ENCODE measurements at regions of chr5 and their contacts with region 1.

Region 1: GRCh38 chr5:40688127-40688761 is 8.5 kb downstream of the PTGER4 start:
- DNase-seq: peak; percentile 81 to 88 (median 84)
- H3K4me3 ChIP-seq: peak overlapping the region in 1 of 2 donors; percentile 46
- H3K4me3 Mint-ChIP-seq: peak overlapping the region; percentile 92 to 100 (median 99)
- H3K27ac ChIP-seq: peak overlapping the region; percentile 59
- H3K27ac Mint-ChIP-seq: peak overlapping the region; percentile 91 to 98 (median 95)
- H3K4me1 ChIP-seq: peaks cover 81% of the 10 kb centered on the region
- H3K4me1 Mint-ChIP-seq: peaks cover 51 to 89% (median 73%) of the 10 kb centered on the region in 4 donors
- H3K27me3 ChIP-seq: no peaks in the 10 kb centered on the region
- H3K27me3 Mint-ChIP-seq: no peaks in the 10 kb centered on the region

Region 2: GRCh38 chr5:39948867-39949468 is 739.3 kb before region 1 on chr5:
- CTCF ChIA-PET with region 1: interaction called, 24 read pairs
- POLR2A ChIA-PET with region 1: interaction called, 4 read pairs
- intact Hi-C with region 1: loop called (anchors 1 kb)
- DNase-seq: peak; percentile 64 to 69 (median 66)
- H3K4me3 ChIP-seq: no peak overlapping the region
- H3K4me3 Mint-ChIP-seq: no peak overlapping the region
- H3K27ac ChIP-seq: no peak overlapping the region
- H3K27ac Mint-ChIP-seq: no peak overlapping the region
- H3K4me1 ChIP-seq: no peaks in the 10 kb centered on the region
- H3K4me1 Mint-ChIP-seq: peaks cover 0 to 5% (median 2%) of the 10 kb centered on the region in 4 donors
- H3K27me3 ChIP-seq: no peaks in the 10 kb centered on the region
- H3K27me3 Mint-ChIP-seq: no peaks in the 10 kb centered on the region

Region 3: GRCh38 chr5:40367255-40367654 is 321.0 kb before region 1 on chr5:
- CTCF ChIA-PET with region 1: interaction called, 7 read pairs
- POLR2A ChIA-PET with region 1: interaction called, 4 read pairs
- intact Hi-C with region 1: loop called (anchors 1 kb)
- DNase-seq: peak in 4 of 5 donors; percentile 34 to 39 (median 36)
- H3K4me3 ChIP-seq: no peak overlapping the region
- H3K4me3 Mint-ChIP-seq: no peak overlapping the region
- H3K27ac ChIP-seq: no peak overlapping the region
- H3K27ac Mint-ChIP-seq: peak overlapping the region in 4 of 7 donors; percentile 2 to 84 (median 70)
- H3K4me1 ChIP-seq: peaks cover 4% of the 10 kb centered on the region
- H3K4me1 Mint-ChIP-seq: peaks cover 3 to 14% (median 9%) of the 10 kb centered on the region in 4 donors
- H3K27me3 ChIP-seq: no peaks in the 10 kb centered on the region
- H3K27me3 Mint-ChIP-seq: no peaks in the 10 kb centered on the region

Region 4: DNA sequence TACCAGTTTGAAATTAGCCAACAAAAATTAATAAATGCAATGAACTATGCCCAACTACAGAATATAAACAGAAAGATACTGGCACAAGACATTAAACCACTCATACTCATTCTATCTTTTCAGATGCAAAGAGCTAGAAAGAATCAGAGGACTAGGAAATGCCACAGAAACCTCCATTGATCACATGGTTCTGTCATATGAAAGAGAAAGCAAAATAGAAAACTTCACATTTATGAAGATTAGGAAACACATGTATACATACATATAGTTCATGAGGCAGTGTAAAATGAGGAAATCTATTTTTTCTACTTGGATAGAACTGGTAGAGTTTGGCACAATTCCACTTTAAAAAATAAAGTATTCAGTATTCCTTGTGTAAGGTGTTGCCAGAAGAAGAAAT is 283.6 kb before region 1 on chr5:
- CTCF ChIA-PET with region 1: interaction called, 14 read pairs
- POLR2A ChIA-PET with region 1: interaction called, 194 read pairs
- intact Hi-C with region 1: no loop called
- DNase-seq: peak; percentile 50 to 68 (median 58)
- H3K4me3 ChIP-seq: no peak overlapping the region
- H3K4me3 Mint-ChIP-seq: peak overlapping the region; percentile 4 to 71 (median 37)
- H3K27ac ChIP-seq: peak overlapping the region; percentile 86
- H3K27ac Mint-ChIP-seq: peak overlapping the region; percentile 85 to 100 (median 99)
- H3K4me1 ChIP-seq: peaks cover 71% of the 10 kb centered on the region
- H3K4me1 Mint-ChIP-seq: peaks cover 49 to 90% (median 72%) of the 10 kb centered on the region in 4 donors
- H3K27me3 ChIP-seq: no peaks in the 10 kb centered on the region
- H3K27me3 Mint-ChIP-seq: no peaks in the 10 kb centered on the region

Region 5: GRCh38 chr5:40502736-40503135 is 185.5 kb before region 1 on chr5:
- CTCF ChIA-PET with region 1: interaction called, 3 read pairs
- POLR2A ChIA-PET with region 1: no interaction called
- intact Hi-C with region 1: loop called (anchors 1 kb)
- DNase-seq: no peak
- H3K4me3 ChIP-seq: no peak overlapping the region
- H3K4me3 Mint-ChIP-seq: no peak overlapping the region
- H3K27ac ChIP-seq: no peak overlapping the region
- H3K27ac Mint-ChIP-seq: no peak overlapping the region
- H3K4me1 ChIP-seq: peaks cover 6% of the 10 kb centered on the region
- H3K4me1 Mint-ChIP-seq: peaks cover 4 to 12% (median 6%) of the 10 kb centered on the region in 4 donors
- H3K27me3 ChIP-seq: no peaks in the 10 kb centered on the region
- H3K27me3 Mint-ChIP-seq: no peaks in the 10 kb centered on the region

Region 6: GRCh38 chr5:40755407-40756365 is 67.4 kb after region 1 on chr5 and contains the start of gene TTC33:
- CTCF ChIA-PET with region 1: no interaction called
- POLR2A ChIA-PET with region 1: no interaction called
- intact Hi-C with region 1: loop called (anchors 2 kb)
- DNase-seq: peak; percentile 90 to 97 (median 92)
- H3K4me3 ChIP-seq: peak within 1 kb of the TSS; percentile 93 to 95
- H3K4me3 Mint-ChIP-seq: no peak within 1 kb of the TSS
- H3K27ac ChIP-seq: peak within 1 kb of the TSS; percentile 90
- H3K27ac Mint-ChIP-seq: peak within 1 kb of the TSS in 1 of 7 donors; percentile 68
- H3K4me1 ChIP-seq: peaks cover 21% of the 10 kb centered on the region
- H3K4me1 Mint-ChIP-seq: peaks cover 8 to 29% (median 16%) of the 10 kb centered on the region in 4 donors
- H3K27me3 ChIP-seq: no peaks in the 10 kb centered on the region
- H3K27me3 Mint-ChIP-seq: no peaks in the 10 kb centered on the region
- total RNA-seq, gene TTC33: 15.2 to 16.2 TPM

Region 7: DNA sequence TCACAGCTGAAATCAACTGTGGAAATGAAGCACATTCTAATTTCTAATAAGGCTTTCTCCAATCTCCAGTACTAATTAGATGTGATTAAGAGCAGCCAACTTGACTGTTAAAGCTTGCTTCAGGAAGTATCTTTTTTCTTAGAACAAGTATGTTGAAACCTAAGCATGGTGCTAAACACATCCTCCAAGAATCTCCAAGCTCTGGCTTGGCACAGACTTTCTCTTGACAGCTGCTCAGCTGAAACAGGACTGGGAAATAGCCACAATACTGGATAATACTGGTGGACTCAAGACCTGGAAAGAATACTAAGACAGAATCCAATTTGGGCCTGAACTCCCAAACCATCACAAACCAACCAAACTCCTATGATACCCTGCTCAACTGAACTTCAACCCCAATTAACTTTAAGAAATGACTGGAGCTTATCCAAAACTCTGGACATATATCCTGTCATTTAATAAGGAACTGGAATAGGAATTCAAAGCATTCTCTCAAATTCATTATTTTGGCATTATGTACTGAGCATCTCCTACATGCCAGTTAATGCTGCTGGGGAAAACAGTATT is 93.7 kb after region 1 on chr5:
- CTCF ChIA-PET with region 1: no interaction called
- POLR2A ChIA-PET with region 1: no interaction called
- intact Hi-C with region 1: no loop called
- DNase-seq: no peak
- H3K4me3 ChIP-seq: no peak overlapping the region
- H3K4me3 Mint-ChIP-seq: no peak overlapping the region
- H3K27ac ChIP-seq: no peak overlapping the region
- H3K27ac Mint-ChIP-seq: peak overlapping the region in 2 of 7 donors; percentile 6 to 12
- H3K4me1 ChIP-seq: peaks cover 46% of the 10 kb centered on the region
- H3K4me1 Mint-ChIP-seq: peaks cover 42 to 67% (median 56%) of the 10 kb centered on the region in 4 donors
- H3K27me3 ChIP-seq: no peaks in the 10 kb centered on the region
- H3K27me3 Mint-ChIP-seq: no peaks in the 10 kb centered on the region